ENCODE measurements at regions of chr6 and their contacts with region 1.

Region 1: DNA sequence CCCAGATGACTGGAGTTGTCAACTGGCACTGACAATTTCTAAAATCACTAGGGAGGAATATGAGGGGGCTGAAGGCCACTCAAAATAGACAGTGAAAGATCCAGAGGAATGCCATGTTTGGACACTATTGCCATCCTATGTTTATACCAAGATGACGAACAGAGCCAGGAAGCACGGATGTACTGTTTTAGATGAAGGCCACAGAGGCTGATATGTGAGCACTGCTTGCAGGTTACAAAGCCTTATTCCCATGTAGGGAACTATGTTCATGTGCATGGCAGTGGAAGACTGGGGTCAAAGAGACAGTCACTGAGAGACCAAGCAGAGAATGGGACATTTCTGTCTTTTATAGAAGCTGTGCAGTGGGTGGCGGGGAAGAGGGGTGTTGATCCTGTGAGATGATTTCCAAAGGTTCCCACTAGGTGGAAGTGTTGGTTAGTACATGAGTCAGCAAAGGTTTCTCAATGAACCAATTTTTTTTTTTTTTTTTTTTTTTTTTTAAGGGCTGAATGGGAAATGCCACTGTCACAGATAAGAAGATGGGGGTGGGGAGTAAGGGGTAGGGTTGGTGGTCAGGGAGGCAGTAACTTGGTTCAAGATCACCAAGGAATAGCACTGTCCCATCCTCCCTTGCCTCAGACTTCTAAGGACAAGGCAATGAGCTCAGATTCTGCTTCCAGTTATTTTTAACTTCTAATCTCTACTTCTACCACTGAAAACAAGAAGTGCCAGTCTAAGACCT is 46.7 kb upstream of the MOCS1 start:
- DNase-seq: no peak
- ATAC-seq: peak; percentile 65; the same call in 1 of the 2 replicates
- H3K4me3 ChIP-seq: no peak overlapping the region
- H3K27ac ChIP-seq: no peak overlapping the region
- H3K4me1 ChIP-seq: no peaks in the 10 kb centered on the region
- H3K27me3 ChIP-seq: no peaks in the 10 kb centered on the region; the same call in 1 of the 2 replicates
- CTCF ChIP-seq: peak; percentile 59

Region 2: GRCh38 chr6:40308533-40309306 is 327.7 kb after region 1 on chr6:
- CTCF ChIA-PET with region 1: interaction called, 6 read pairs
- POLR2A ChIA-PET with region 1: no interaction called
- in situ Hi-C with region 1: no loop called
- intact Hi-C with region 1: loop called (anchors 5 kb)
- DNase-seq: peak; percentile 41
- ATAC-seq: peak; percentile 71; the same call in 1 of the 2 replicates
- H3K4me3 ChIP-seq: no peak overlapping the region
- H3K27ac ChIP-seq: no peak overlapping the region
- H3K4me1 ChIP-seq: no peaks in the 10 kb centered on the region
- H3K27me3 ChIP-seq: peaks cover 14% of the 10 kb centered on the region
- CTCF ChIP-seq: peak; percentile 85

Region 3: DNA sequence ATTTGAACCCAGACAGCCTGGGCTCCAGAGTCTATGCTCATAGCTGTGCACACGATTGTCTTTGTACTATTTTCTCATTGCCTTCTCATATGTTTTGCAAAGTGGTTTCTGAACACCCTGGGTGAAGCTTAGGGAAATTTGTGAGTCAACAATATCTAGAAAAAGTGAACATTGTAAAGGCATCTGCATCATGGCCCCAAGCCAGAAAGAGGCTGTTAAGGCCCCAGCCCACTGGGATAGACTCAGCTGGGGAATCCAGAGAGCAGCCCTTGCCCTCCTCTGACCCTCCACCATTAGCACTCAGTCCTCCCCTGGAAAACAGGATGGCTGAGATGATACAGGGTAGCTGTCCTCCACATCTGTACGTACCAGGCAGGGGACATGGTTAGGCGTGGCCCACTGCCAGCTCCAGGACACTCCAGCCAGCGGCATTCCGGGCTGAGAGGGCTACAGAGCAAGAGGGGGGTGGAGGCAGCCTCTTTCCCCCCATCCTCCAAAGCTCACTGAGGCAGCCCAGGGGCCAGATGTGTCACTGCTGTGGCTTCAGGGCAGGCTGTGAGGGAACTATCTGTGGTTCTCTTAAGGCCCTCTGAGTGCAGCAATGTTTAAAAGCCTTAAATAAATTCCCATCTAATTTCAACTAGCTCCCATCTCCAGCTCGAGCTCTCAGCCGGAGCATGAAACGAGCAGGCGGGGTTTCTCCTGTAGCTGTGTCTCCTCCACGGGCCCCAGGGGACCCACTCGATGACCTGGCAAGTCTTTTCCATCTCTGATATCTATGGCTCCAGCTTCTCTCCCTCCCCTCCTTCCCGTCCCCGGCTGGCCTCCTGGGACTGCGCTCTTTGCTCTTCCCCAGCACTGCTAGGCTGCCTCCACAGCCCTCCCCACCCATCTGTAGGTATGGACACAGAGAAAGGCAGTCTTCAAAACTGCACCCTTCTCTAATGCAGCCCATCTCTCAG is 815.5 kb after region 1 on chr6:
- CTCF ChIA-PET with region 1: interaction called, 14 read pairs
- POLR2A ChIA-PET with region 1: no interaction called
- in situ Hi-C with region 1: no loop called
- intact Hi-C with region 1: no loop called
- DNase-seq: no peak
- ATAC-seq: 0 out of 2 replicates have a peak, but pooled peaks have one; percentile 30
- H3K4me3 ChIP-seq: no peak overlapping the region
- H3K27ac ChIP-seq: no peak overlapping the region
- H3K4me1 ChIP-seq: no peaks in the 10 kb centered on the region
- H3K27me3 ChIP-seq: peaks cover 6% of the 10 kb centered on the region; the same call in 1 of the 2 replicates
- CTCF ChIP-seq: no peak